ENCODE measurements at regions of chr14 and their contacts with region 1.

Region 1: DNA sequence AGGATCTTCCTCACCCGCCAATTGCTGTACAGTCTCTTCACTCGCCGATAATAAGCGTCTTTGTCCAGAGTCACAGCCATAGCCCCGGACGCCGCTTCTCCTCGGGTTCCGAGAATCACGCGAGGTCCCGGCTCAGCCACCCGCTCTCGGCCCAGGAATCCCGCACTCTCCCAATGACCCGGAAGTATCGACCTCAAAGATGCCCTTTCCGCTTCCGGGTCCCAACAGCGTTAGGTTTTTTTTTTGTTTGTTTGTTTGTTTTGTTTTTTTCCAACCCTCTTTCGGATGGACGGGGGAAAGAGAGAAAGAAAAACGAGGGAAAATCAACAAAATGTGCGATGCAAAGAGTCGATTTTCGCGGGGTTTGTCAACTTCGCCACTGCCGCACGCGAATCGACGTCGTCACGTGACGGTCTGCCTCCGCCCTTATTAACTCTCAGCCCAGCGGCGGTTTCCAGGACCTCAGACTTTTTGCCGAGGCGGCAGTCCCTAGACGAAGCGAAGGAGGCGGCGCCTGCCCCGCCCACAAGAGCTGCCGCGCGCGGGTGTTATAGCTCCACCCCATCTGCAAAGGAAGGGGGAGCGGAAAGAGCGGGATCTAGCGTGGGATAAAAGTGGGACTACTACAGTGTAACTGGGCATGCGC is at the start of gene SUPT16H:
- DNase-seq: peak; percentile 96 to 98
- H3K4me3 ChIP-seq: peak within 1 kb of the TSS; percentile 68 to 78
- H3K27ac ChIP-seq: peak within 1 kb of the TSS; percentile 76 to 91
- H3K4me1 ChIP-seq: peaks cover 0 to 30% (median 18%) of the 10 kb centered on the region in 4 donors
- H3K27me3 ChIP-seq: no peaks in the 10 kb centered on the region
- CTCF ChIP-seq: peak in 1 of 2 experiments; percentile 31

Region 2: DNA sequence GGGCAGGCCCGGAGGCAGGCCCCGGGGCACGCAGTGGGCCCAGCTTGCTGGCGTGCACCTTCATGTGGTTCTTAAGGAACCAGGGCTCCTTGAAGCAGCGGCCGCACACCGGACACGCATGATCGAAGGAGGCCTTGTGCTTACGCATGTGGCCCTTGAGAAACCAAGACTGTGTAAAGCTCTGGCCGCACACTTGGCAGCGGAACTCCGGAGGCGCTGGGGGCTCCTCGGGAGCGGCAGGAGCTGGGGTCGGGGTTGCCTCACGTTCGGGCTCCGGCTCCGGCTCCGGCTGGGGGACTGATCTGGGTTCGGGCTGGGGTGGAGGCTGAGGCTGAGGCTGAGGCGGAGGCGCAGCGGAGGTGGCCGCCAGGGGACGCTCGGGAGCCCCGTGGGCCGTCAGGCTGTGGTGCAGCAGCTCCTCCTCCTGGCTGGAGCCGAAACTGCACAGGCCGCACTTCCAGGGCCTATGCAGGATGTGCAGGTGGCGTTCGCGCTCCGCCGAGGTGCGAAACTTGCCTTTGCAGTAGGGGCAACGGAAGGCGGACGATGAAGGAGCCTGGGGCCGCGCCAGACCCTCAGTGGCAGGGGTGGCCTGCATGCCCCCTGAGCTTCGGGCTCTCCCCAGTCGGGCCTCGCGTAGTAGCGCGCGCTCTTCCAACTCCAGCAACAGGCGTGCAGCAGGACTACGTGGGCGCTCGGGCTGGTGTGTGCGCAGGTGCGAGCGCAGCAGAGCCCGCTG is 291.5 kb before region 1 on chr14:
- intact Hi-C with region 1: loop called (anchors 5 kb)
- DNase-seq: peak; percentile 77 to 89
- H3K4me3 ChIP-seq: no peak overlapping the region
- H3K27ac ChIP-seq: peak overlapping the region; percentile 29 to 47
- H3K4me1 ChIP-seq: peaks cover 0 to 26% (median 20%) of the 10 kb centered on the region in 4 donors
- H3K27me3 ChIP-seq: no peaks in the 10 kb centered on the region
- CTCF ChIP-seq: peak; percentile 100

Region 3: DNA sequence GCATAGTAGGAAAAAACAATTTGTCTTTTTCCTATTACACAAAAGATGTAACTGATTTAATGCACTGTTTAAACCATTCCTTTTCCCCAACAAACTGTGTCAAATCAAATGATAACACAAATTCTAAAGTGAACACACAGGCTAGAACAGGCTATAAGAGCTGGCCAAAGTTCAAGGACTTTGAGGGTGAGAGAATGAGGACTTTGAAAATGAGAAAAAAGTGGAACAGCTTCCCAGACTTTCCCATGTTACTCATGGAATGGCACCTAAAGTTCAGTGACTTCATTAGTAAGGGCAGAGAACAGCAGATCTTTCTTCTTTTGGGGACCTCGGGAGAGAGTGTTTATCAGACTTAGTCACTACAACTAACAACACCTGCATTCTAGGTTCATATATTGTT is 260.5 kb before region 1 on chr14:
- intact Hi-C with region 1: no loop called
- DNase-seq: no peak
- H3K4me3 ChIP-seq: no peak overlapping the region
- H3K27ac ChIP-seq: no peak overlapping the region
- H3K4me1 ChIP-seq: no peaks in the 10 kb centered on the region
- H3K27me3 ChIP-seq: no peaks in the 10 kb centered on the region
- CTCF ChIP-seq: no peak

Region 4: DNA sequence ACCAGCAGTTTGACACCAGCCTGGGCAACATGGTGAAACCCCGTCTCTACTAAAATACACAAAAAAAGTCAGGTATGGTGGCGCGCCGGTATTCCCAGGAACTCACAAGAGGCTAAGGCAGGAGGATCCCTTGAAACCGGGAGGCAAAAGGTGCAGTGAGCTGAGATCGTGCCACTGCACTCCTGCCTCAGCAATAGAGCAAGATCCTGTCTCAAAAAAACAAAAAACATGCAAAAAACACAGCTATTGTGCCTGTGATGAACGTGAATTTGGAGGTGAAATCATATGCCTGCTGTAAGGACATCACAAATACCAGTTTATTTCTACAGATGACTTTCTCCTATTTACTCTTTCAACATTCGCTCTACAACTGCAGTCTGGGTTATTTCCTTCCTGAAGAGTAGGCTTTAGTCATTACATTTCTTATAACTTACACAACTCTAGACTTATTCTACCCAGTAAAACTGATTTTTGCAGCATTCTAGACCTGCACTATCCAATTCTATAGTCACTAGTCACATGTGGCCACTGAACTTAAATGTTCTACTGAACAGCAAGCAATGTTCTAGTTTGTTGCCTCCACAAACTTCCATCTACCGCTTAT is 163.0 kb before region 1 on chr14:
- intact Hi-C with region 1: no loop called
- DNase-seq: no peak
- H3K4me3 ChIP-seq: no peak overlapping the region
- H3K27ac ChIP-seq: no peak overlapping the region
- H3K4me1 ChIP-seq: peaks cover 0 to 49% (median 8%) of the 10 kb centered on the region in 4 donors
- H3K27me3 ChIP-seq: no peaks in the 10 kb centered on the region
- CTCF ChIP-seq: no peak

Region 5: GRCh38 chr14:21233457-21234076 is 150.4 kb before region 1 on chr14:
- intact Hi-C with region 1: loop called (anchors 10 kb)
- DNase-seq: no peak
- H3K4me3 ChIP-seq: no peak overlapping the region
- H3K27ac ChIP-seq: no peak overlapping the region
- H3K4me1 ChIP-seq: peaks cover 0 to 77% (median 31%) of the 10 kb centered on the region in 4 donors
- H3K27me3 ChIP-seq: no peaks in the 10 kb centered on the region
- CTCF ChIP-seq: no peak

Region 6: GRCh38 chr14:21269252-21270046 is 114.5 kb before region 1 on chr14 and contains the start of gene HNRNPC:
- intact Hi-C with region 1: loop called (anchors 5 kb)
- DNase-seq: peak; percentile 100
- H3K4me3 ChIP-seq: peak within 1 kb of the TSS; percentile 78 to 96
- H3K27ac ChIP-seq: peak within 1 kb of the TSS; percentile 96 to 98
- H3K4me1 ChIP-seq: peaks cover 0 to 43% (median 23%) of the 10 kb centered on the region in 4 donors
- H3K27me3 ChIP-seq: no peaks in the 10 kb centered on the region
- CTCF ChIP-seq: peak in 1 of 2 experiments; percentile 30

Region 7: DNA sequence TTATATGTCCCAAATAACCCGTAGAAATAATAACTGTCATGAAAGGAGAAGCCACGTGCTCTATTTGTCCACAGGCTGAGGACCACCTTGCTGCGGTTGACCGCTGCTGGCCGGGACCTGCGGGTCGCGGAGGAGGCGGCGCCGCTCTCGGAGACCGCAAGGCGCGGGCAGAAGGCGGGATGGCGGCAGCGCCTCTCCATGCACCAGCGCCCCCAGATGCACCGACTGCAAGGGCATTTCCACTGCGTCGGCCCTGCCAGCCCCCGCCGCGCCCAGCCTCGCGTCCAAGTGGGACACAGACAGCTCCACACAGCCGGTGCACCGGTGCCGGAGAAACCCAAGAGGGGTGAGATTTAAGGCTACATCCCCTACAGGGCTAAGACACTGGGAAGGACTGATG is 83.1 kb before region 1 on chr14:
- intact Hi-C with region 1: no loop called
- DNase-seq: no peak
- H3K4me3 ChIP-seq: no peak overlapping the region
- H3K27ac ChIP-seq: no peak overlapping the region
- H3K4me1 ChIP-seq: peaks cover 0 to 6% (median 2%) of the 10 kb centered on the region in 4 donors
- H3K27me3 ChIP-seq: peaks cover 0 to 19% of the 10 kb centered on the region in 2 donors
- CTCF ChIP-seq: no peak

Region 8: DNA sequence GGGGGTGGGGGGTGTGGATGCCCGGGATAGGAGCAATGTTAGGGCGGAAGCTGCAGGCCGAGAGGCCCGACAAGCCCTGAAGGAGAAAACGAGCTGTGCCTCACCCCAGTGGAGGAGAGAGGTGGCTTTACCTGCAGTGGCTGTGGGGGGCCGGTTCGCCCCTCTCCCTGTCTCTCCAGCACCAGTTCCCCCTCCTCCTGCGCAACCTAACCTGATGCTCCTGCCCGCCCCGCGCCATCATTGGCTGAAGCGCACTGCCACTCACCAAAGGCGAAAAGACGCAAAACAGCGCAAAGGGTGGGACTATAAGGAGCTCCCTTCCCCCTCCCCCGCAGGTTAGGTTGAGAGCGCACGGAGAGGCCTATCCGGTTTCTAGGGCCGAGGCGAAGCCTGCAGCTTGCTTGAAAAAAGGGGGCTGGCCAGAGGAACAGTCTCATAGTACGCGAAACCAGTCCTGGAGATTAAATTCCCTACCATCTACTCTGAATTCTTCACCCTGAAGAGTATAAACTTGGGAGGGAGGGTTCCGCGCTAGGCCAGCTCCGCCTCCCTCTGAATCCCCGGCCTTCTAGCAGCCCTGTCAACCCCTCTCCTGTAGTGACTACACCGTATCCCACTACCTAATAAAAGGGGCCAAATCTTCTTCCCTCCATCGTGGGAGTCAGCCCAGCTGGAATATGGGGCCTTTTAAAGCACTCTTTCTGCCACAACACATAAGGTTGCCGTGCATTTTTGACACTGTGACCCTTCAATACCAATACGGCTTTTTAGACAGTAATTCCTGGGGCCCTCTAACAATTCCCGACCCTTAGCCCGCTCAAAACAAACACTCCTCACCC is 53.3 kb after region 1 on chr14:
- intact Hi-C with region 1: loop called (anchors 5 kb)
- DNase-seq: peak; percentile 99
- H3K4me3 ChIP-seq: peak overlapping the region; percentile 81 to 97
- H3K27ac ChIP-seq: peak overlapping the region; percentile 87 to 94
- H3K4me1 ChIP-seq: peaks cover 0 to 30% (median 18%) of the 10 kb centered on the region in 4 donors
- H3K27me3 ChIP-seq: no peaks in the 10 kb centered on the region
- CTCF ChIP-seq: peak in 1 of 2 experiments; percentile 11